ENCODE measurements at regions of chr9 and their contacts with region 1.

Region 1: GRCh38 chr9:97900738-97901565 is 21.3 kb downstream of the TRMO start:
- DNase-seq: peak; percentile 68
- H3K4me3 Mint-ChIP-seq: no peak overlapping the region
- H3K27ac Mint-ChIP-seq: no peak overlapping the region
- H3K4me1 Mint-ChIP-seq: peaks cover 5% of the 10 kb centered on the region
- H3K27me3 Mint-ChIP-seq: no peaks in the 10 kb centered on the region
- CTCF ChIP-seq: peak; percentile 64

Region 2: GRCh38 chr9:97696803-97697601 is 203.9 kb before region 1 on chr9 and contains the start of gene XPA:
- CTCF ChIA-PET with region 1: interaction called, 10 read pairs
- POLR2A ChIA-PET with region 1: interaction called, 11 read pairs
- intact Hi-C with region 1: no loop called
- DNase-seq: peak; percentile 96
- H3K4me3 Mint-ChIP-seq: peak within 1 kb of the TSS; percentile 86
- H3K27ac Mint-ChIP-seq: peak within 1 kb of the TSS; percentile 80
- H3K4me1 Mint-ChIP-seq: peaks cover 38% of the 10 kb centered on the region
- H3K27me3 Mint-ChIP-seq: no peaks in the 10 kb centered on the region
- CTCF ChIP-seq: no peak
- total RNA-seq, gene XPA: 11.8 and 12.3 TPM in 2 replicates

Region 3: GRCh38 chr9:97710356-97711222 is 190.4 kb before region 1 on chr9:
- CTCF ChIA-PET with region 1: interaction called, 101 read pairs
- POLR2A ChIA-PET with region 1: interaction called, 4 read pairs
- intact Hi-C with region 1: loop called (anchors 1 kb)
- DNase-seq: peak; percentile 75
- H3K4me3 Mint-ChIP-seq: no peak overlapping the region
- H3K27ac Mint-ChIP-seq: no peak overlapping the region
- H3K4me1 Mint-ChIP-seq: peaks cover 24% of the 10 kb centered on the region
- H3K27me3 Mint-ChIP-seq: no peaks in the 10 kb centered on the region
- CTCF ChIP-seq: peak; percentile 82

Region 4: GRCh38 chr9:97890038-97890437 is 10.9 kb before region 1 on chr9:
- CTCF ChIA-PET with region 1: interaction called, 82 read pairs
- POLR2A ChIA-PET with region 1: interaction called, 3 read pairs
- intact Hi-C with region 1: no loop called
- DNase-seq: peak; percentile 54
- H3K4me3 Mint-ChIP-seq: no peak overlapping the region
- H3K27ac Mint-ChIP-seq: no peak overlapping the region
- H3K4me1 Mint-ChIP-seq: no peaks in the 10 kb centered on the region
- H3K27me3 Mint-ChIP-seq: no peaks in the 10 kb centered on the region
- CTCF ChIP-seq: peak; percentile 59

Region 5: DNA sequence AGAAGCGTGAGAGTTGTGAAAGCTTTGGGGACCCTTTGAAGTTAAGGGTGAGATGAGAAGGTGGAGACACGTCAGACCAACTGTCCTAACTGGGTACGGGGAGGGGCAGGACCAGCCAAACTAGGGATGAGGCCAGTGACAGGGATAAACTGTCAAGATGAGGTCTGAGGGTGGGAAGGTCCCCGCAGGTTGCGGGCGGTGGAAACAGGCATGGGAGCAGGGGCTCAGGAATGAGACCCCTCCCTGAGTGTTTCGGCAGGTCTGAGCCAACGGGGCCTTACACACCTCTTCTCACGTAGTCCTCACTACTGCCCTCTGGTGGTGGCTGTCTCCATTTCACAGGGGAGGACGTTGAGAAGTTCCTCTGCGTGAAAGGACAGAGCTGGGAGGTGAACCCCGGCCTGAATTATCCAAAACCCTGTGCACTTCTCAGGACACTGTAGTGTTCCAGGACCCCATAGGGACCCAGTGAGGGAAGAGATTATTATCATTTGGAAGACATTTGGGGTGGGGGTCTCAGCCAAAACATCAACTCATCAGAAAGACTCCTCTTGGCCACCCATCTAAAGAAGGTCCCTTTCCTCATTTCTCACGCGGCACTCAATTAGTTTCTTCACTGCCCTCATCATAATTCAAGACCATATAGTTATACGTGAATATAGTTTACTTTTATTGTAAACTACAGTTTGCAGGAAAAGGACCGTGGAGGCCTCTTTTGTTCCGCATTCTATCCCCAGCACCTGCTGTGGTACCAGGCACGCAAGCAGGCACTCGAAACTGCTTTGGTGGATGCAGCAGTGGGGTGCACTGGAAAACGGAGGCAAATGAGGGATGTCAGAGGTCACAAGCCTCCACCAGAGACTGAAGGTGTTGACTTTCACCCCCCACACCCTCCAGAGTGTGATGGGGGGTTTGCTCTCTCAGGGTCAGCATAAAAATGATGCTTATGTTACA is 133.9 kb after region 1 on chr9:
- CTCF ChIA-PET with region 1: no interaction called
- POLR2A ChIA-PET with region 1: no interaction called
- intact Hi-C with region 1: no loop called
- DNase-seq: peak; percentile 86
- H3K4me3 Mint-ChIP-seq: peak overlapping the region; percentile 24
- H3K27ac Mint-ChIP-seq: no peak overlapping the region
- H3K4me1 Mint-ChIP-seq: peaks cover 24% of the 10 kb centered on the region
- H3K27me3 Mint-ChIP-seq: no peaks in the 10 kb centered on the region
- CTCF ChIP-seq: peak; percentile 75

Measured in MCF 10A (cell line).